Transverse colon (tissue), 4 donors: ENCODE measurements at regions of chr16 and their contacts with region 1.

Region 1: DNA sequence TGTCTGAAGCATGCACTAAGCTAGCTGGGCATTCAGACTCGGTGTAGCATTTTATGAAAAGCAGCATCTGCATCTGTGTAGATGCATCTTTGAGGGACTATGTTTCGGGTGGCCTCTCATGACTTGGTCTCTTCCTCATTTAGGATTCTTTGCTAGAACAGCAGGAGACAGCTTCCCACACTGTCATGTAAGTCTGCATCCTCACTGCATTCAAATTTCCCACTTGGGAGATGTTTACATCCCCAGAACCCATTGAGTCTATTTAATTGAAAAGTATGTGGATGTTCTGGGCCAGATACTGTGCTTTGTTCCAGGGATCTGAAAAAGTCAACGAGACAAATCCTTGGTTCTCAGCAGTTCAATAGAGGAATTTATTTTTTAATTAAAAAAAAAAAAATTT is 198.6 kb upstream of the EEF2KMT start:
- DNase-seq: no peak
- H3K4me3 ChIP-seq: no peak overlapping the region
- H3K27ac ChIP-seq: no peak overlapping the region
- H3K4me1 ChIP-seq: no peaks in the 10 kb centered on the region
- H3K27me3 ChIP-seq: no peaks in the 10 kb centered on the region
- CTCF ChIP-seq: no peak
- EP300 ChIP-seq: no peak
- POLR2A ChIP-seq: no peak

Region 2: GRCh38 chr16:5319799-5320198 is 23.6 kb after region 1 on chr16:
- in situ Hi-C with region 1: no loop called
- intact Hi-C with region 1: loop called (anchors 1 kb)
- DNase-seq: no peak
- H3K4me3 ChIP-seq: no peak overlapping the region
- H3K27ac ChIP-seq: no peak overlapping the region
- H3K4me1 ChIP-seq: no peaks in the 10 kb centered on the region
- H3K27me3 ChIP-seq: no peaks in the 10 kb centered on the region
- CTCF ChIP-seq: no peak
- EP300 ChIP-seq: no peak
- POLR2A ChIP-seq: no peak